Activated CD4-positive, alpha-beta T cell treated with anti-CD3 and anti-CD28 coated beads for 36 hours (primary cell): ENCODE measurements at regions of chr3 and their contacts with region 1.

Region 1: DNA sequence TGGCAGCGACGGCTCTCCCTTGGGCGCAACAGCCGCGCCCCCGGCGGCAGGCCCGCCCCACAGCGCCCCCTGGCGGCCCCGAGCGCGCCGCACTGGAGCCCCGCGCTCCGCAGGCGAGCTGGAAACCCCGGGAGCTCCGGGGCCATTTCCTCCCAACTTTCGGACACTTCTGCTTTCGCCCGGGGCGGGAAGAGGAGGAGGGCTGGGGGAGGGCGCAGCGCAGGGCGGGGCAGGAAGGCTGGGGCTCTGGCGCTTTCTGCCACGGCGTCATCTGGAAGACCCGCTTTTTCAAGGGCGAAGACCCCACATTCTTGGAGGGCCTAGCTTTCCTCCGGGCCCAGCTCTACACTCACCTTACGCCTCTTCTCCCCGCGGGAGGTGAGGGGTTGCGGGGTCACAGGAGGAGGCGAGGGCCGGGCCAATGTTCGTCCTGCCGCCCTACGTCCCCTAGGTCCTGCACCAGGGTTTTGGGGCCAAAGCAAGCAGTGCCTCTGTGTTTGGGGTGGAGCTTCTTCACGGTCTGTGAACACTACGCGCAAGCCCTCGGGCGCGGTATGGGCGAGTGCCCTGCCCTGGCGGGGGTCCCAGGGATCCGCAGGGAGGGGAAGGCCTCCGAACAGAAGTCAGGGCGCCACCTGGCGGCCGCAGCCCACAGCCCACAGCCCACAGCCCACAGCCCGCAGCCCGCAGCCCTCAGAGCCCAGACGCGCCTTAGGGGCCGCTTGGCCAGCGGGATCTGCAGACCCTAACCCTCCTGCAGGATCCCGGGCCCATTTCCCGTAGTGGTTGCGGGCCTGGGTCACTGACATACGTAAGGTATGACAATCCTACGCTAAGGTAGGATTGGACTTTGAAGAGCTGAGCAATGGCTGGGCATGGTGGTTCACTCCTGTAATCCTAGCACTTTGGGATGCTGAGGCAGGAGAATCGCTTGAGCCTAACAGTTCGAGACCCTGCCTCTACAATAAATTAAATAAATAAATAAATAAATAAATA is 31.1 kb downstream of the FOXL2 start:
- DNase-seq: peak; percentile 93
- ATAC-seq: peak; percentile 89
- H3K4me3 Mint-ChIP-seq: peak overlapping the region; percentile 76
- H3K27ac Mint-ChIP-seq: peak overlapping the region; percentile 73
- H3K4me1 Mint-ChIP-seq: peaks cover 5% of the 10 kb centered on the region
- H3K27me3 Mint-ChIP-seq: peaks cover 2% of the 10 kb centered on the region

Region 2: DNA sequence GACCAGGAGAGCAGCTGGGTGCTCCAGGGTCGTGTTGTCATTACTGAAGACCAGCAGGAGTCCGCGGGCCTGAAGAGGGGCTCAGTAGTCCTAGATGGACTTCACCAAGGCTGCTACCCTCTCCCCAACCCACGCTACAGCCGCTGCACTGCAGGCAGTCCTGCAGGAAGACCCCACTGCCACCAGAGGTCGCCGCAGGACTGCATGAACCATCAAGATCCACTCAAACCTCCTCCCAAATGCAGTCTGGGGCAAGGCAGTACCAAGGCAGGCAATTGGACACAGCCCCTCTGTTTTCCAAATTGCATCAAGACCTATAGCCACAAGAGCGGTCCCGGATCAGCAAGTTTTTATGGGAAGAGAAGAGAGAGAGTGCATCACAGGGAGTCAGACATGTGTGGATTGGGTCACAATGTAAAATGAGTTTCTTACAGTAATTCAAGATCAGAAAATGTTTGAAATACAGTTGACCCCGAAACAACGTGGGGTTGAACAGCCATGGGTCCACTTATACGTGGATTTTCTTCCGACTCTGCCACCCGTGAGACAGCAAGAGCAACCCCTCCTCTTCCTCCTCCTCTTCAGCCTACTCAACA is 847.1 kb before region 1 on chr3:
- CTCF ChIA-PET with region 1: interaction called, 3 read pairs
- POLR2A ChIA-PET with region 1: no interaction called
- intact Hi-C with region 1: loop called in 1 of 2 experiments (anchors 5 kb)
- DNase-seq: peak; percentile 90
- ATAC-seq: peak; percentile 55
- H3K4me3 Mint-ChIP-seq: no peak overlapping the region
- H3K27ac Mint-ChIP-seq: no peak overlapping the region
- H3K4me1 Mint-ChIP-seq: peaks cover 14% of the 10 kb centered on the region
- H3K27me3 Mint-ChIP-seq: peaks cover 18% of the 10 kb centered on the region

Region 3: GRCh38 chr3:138417559-138417982 is 498.2 kb before region 1 on chr3:
- CTCF ChIA-PET with region 1: interaction called, 10 read pairs
- POLR2A ChIA-PET with region 1: no interaction called
- intact Hi-C with region 1: no loop called
- DNase-seq: peak; percentile 80
- ATAC-seq: peak; percentile 87
- H3K4me3 Mint-ChIP-seq: no peak overlapping the region
- H3K27ac Mint-ChIP-seq: no peak overlapping the region
- H3K4me1 Mint-ChIP-seq: peaks cover 4% of the 10 kb centered on the region
- H3K27me3 Mint-ChIP-seq: peaks cover 9% of the 10 kb centered on the region

Region 4: GRCh38 chr3:138479438-138479863 is 436.4 kb before region 1 on chr3:
- CTCF ChIA-PET with region 1: interaction called, 18 read pairs
- POLR2A ChIA-PET with region 1: no interaction called
- intact Hi-C with region 1: loop called in 1 of 2 experiments (anchors 1 kb)
- DNase-seq: peak; percentile 65
- ATAC-seq: peak; percentile 42
- H3K4me3 Mint-ChIP-seq: no peak overlapping the region
- H3K27ac Mint-ChIP-seq: no peak overlapping the region
- H3K4me1 Mint-ChIP-seq: no peaks in the 10 kb centered on the region
- H3K27me3 Mint-ChIP-seq: peaks cover 9% of the 10 kb centered on the region

Region 5: DNA sequence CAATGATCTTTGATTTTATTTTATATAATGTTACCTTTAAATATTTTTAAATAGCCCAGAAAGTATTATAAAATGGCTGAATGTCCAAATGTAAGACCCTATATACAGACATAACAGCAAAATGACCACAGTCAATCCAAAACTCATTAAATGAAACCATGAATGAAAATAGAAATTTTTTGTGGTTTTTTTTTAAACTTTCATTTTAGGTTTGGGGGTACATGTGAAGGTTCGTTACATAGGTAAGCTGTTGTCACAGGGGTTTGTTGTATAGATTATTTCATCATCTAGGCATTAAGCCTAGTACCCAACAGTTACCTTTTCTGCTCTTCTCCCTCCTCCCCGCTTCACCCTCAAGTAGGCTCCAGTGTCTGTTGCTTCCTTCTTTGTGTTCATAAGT is 198.5 kb before region 1 on chr3:
- CTCF ChIA-PET with region 1: interaction called, 33 read pairs
- POLR2A ChIA-PET with region 1: no interaction called
- intact Hi-C with region 1: no loop called
- DNase-seq: no peak
- ATAC-seq: no peak
- H3K4me3 Mint-ChIP-seq: no peak overlapping the region
- H3K27ac Mint-ChIP-seq: no peak overlapping the region
- H3K4me1 Mint-ChIP-seq: peaks cover 8% of the 10 kb centered on the region
- H3K27me3 Mint-ChIP-seq: no peaks in the 10 kb centered on the region

Region 6: GRCh38 chr3:138875754-138876664 is 39.8 kb before region 1 on chr3:
- CTCF ChIA-PET with region 1: interaction called, 11 read pairs
- POLR2A ChIA-PET with region 1: no interaction called
- intact Hi-C with region 1: no loop called
- DNase-seq: no peak
- ATAC-seq: peak; percentile 88
- H3K4me3 Mint-ChIP-seq: no peak overlapping the region
- H3K27ac Mint-ChIP-seq: peak overlapping the region; percentile 21
- H3K4me1 Mint-ChIP-seq: peaks cover 8% of the 10 kb centered on the region
- H3K27me3 Mint-ChIP-seq: no peaks in the 10 kb centered on the region

Region 7: GRCh38 chr3:140664115-140664514 is 1748.3 kb after region 1 on chr3:
- CTCF ChIA-PET with region 1: no interaction called
- POLR2A ChIA-PET with region 1: no interaction called
- intact Hi-C with region 1: no loop called
- DNase-seq: no peak
- ATAC-seq: no peak
- H3K4me3 Mint-ChIP-seq: no peak overlapping the region
- H3K27ac Mint-ChIP-seq: no peak overlapping the region
- H3K4me1 Mint-ChIP-seq: no peaks in the 10 kb centered on the region
- H3K27me3 Mint-ChIP-seq: no peaks in the 10 kb centered on the region